BJ (cell line): ENCODE measurements at regions of chr11 and their contacts with region 1.

Region 1: DNA sequence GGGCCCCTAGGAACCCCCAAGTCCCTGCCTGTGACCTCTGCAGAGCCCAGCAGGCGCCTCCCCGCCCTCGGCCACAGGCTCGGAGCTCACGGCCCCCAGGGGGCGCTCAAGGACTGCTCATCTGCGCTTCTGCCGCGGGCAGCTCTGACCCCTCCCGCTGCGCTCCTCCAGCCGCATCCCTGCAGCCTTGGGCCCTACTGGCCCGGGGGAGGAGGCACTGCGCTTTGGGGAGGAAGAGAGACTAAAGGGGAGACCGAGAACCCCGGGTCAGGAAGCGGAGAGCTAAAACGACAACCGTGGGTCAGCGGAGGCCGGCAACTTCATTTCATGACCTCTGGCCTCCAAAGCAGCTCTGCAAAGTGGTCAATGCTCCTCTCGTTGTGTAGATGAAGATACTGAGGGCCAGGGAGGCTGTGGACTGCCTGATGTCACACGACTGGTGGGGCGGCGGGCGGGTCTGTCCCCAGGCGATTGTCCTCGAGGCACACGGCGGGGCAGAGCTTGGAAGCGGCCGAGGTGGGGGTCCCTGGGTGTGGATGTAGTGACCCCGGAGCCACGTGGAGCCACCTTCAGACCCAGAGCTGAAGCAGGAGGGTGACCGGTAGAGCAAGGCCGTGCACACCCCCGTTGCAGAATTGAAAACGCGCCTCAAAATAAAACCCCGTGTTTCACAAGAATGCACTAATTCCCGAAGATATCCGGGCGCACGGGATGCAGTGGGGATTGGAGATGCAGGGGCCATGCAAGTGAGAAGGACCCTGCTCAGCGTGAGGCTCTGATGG is 2.7 kb upstream of the KRTAP5-6 start:
- DNase-seq: no peak
- H3K4me3 ChIP-seq: no peak overlapping the region
- H3K27me3 ChIP-seq: peaks cover 14% of the 10 kb centered on the region
- CTCF ChIP-seq: peak; percentile 93

Region 2: GRCh38 chr11:1652771-1653540 is 41.3 kb before region 1 on chr11:
- CTCF ChIA-PET with region 1: interaction called, 70 read pairs
- POLR2A ChIA-PET with region 1: no interaction called
- DNase-seq: no peak
- H3K4me3 ChIP-seq: no peak overlapping the region
- H3K27me3 ChIP-seq: peaks cover 6% of the 10 kb centered on the region
- CTCF ChIP-seq: peak; percentile 96

Region 3: GRCh38 chr11:1706634-1707400 is 12.6 kb after region 1 on chr11:
- CTCF ChIA-PET with region 1: interaction called, 18 read pairs
- POLR2A ChIA-PET with region 1: no interaction called
- DNase-seq: no peak
- H3K4me3 ChIP-seq: no peak overlapping the region
- H3K27me3 ChIP-seq: peaks cover 10% of the 10 kb centered on the region
- CTCF ChIP-seq: peak; percentile 32; the same call in 1 of the 2 replicates

Region 4: GRCh38 chr11:1807264-1807995 is 113.2 kb after region 1 on chr11:
- CTCF ChIA-PET with region 1: interaction called, 12 read pairs
- POLR2A ChIA-PET with region 1: no interaction called
- DNase-seq: no peak
- H3K4me3 ChIP-seq: no peak overlapping the region
- H3K27me3 ChIP-seq: peaks cover 1% of the 10 kb centered on the region; the same call in 1 of the 2 replicates
- CTCF ChIP-seq: 0 out of 2 replicates have a peak, but pooled peaks have one; percentile 11

Region 5: DNA sequence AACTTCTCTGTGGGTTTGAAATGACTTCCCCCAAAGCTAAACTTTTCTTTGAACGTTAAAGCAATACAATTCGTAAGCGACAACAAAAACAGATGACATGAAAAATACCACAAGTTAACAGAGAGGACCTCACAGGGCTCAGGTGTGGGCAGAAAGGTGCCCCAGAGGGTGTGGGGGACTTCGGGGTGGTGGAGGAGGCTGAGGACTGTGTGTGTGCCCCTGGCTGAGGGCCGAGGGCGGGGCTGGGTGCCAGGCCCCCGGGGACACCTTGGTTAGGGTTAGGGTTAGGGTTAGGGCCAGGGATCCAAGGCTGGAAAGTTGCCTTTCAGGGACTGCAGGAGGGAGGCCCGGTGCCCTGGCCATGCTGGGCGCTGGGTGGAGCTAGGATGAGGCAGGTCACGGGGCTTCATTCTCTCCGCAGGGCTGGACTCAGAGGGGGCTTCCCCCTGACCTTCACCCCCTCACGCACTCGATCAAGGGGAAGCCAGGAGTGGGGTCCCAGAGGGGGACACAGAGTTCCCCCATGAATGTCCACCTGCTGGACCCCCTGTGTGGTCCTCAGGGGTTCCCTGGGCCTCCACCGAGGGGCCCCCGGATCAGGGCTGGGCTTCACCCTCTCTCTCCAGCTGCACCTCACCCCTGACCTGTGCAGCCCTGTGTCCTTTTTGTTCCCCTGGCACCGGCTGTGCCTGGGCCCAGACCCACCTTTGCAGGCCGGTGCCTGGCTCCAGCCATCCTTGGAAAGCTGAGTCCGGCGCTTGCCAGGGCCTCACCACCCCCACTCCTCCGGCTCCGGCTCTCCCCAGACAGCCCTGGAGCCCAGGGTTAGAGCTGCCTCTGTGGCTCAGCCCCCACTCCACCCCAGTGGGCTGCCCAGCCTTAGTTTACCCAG is 151.6 kb after region 1 on chr11:
- CTCF ChIA-PET with region 1: interaction called, 12 read pairs
- POLR2A ChIA-PET with region 1: no interaction called
- DNase-seq: no peak
- H3K4me3 ChIP-seq: no peak overlapping the region
- H3K27me3 ChIP-seq: no peaks in the 10 kb centered on the region; the same call in none of the 2 replicates
- CTCF ChIP-seq: no peak

Region 6: DNA sequence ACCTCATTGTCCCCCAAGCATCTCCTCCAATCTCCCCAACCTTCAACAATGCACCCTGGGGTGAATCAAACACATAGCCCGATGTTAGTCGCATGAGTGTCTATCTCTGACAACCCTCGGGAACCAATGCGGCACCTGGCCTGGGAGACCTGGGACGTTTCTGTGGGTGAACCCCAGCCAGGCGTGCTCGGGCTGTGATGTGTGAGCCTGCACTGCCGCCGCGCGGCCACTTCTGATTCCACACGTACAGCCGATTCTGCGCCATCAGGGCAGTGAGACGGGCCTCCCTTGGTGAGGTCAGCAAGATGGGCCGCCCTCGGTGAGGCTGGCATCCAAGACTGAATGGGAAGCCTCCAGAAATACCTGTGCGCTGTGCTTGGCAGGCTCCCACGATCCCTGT is 308.6 kb after region 1 on chr11:
- CTCF ChIA-PET with region 1: interaction called, 68 read pairs
- POLR2A ChIA-PET with region 1: no interaction called
- DNase-seq: no peak
- H3K4me3 ChIP-seq: no peak overlapping the region
- H3K27me3 ChIP-seq: no peaks in the 10 kb centered on the region
- CTCF ChIP-seq: no peak